ENCODE measurements at regions of chr3 and their contacts with region 1.

Region 1: DNA sequence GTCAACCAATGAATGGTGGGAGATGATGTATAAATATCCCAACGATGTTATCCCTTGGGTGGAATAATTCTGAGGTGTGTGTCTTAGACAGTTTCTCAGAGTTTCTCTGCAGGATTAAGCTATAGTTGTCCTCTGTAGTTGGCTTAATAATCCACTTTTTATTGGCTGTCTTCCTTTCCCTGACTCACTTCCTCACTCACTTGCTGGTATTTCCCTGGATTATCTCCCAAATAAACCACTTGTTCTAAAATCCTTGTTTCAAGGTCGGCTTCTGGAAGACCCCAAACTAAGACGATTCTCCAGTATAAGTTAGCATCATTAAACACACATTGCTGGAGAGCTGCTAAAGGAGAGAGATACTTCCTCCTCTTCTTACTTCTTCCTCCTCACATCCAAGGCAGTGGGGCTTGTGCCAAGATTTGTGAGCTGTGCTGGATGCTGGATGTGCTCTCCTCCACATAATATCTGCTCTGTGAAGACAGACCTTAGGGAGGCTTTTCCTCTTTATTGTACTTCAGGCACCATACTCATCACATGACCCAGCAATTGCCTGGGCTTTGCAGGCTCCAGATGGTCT is 22.5 kb upstream of the ROPN1 start:
- DNase-seq: peak; percentile 16
- ATAC-seq: peak; percentile 31; the same call in 1 of the 2 replicates
- H3K4me3 ChIP-seq: no peak overlapping the region
- H3K27ac ChIP-seq: no peak overlapping the region
- H3K4me1 ChIP-seq: no peaks in the 10 kb centered on the region
- H3K27me3 ChIP-seq: peaks cover 20% of the 10 kb centered on the region
- CTCF ChIP-seq: no peak

Region 2: DNA sequence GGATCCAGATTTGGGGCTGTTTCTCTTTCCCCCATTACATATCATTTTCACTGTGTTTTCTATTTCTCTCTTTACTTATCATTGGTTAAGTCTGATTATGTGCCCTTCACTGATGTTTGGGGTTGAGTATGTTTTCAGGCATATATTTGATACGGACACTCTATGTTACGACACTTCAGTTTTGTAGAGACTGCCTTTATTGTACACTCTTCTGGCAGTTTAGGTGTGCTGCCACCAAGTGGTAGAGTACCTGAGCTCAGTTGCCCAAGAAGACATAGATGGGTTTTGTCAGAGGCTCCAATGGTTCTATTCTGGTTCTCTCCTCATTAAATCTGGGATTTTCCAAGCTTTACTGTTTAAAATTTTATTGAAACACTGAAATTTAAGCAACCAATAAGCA is 232.5 kb after region 1 on chr3:
- CTCF ChIA-PET with region 1: no interaction called
- POLR2A ChIA-PET with region 1: no interaction called
- intact Hi-C with region 1: loop called (anchors 10 kb)
- DNase-seq: peak; percentile 62
- ATAC-seq: peak; percentile 61
- H3K4me3 ChIP-seq: no peak overlapping the region
- H3K27ac ChIP-seq: no peak overlapping the region
- H3K4me1 ChIP-seq: peaks cover 14% of the 10 kb centered on the region
- H3K27me3 ChIP-seq: 0 out of 2 replicates have a peak, but pooled peaks cover 4% of the 10 kb centered on the region
- CTCF ChIP-seq: peak; percentile 88